ENCODE measurements at regions of chr4 and their contacts with region 1.

Region 1: GRCh38 chr4:153127760-153128494 is 76.3 kb upstream of the TRIM2 start:
- DNase-seq: peak; percentile 84
- H3K4me3 Mint-ChIP-seq: no peak overlapping the region
- H3K27ac Mint-ChIP-seq: no peak overlapping the region
- H3K4me1 Mint-ChIP-seq: peaks cover 2% of the 10 kb centered on the region
- H3K27me3 Mint-ChIP-seq: peaks cover 43% of the 10 kb centered on the region

Region 2: DNA sequence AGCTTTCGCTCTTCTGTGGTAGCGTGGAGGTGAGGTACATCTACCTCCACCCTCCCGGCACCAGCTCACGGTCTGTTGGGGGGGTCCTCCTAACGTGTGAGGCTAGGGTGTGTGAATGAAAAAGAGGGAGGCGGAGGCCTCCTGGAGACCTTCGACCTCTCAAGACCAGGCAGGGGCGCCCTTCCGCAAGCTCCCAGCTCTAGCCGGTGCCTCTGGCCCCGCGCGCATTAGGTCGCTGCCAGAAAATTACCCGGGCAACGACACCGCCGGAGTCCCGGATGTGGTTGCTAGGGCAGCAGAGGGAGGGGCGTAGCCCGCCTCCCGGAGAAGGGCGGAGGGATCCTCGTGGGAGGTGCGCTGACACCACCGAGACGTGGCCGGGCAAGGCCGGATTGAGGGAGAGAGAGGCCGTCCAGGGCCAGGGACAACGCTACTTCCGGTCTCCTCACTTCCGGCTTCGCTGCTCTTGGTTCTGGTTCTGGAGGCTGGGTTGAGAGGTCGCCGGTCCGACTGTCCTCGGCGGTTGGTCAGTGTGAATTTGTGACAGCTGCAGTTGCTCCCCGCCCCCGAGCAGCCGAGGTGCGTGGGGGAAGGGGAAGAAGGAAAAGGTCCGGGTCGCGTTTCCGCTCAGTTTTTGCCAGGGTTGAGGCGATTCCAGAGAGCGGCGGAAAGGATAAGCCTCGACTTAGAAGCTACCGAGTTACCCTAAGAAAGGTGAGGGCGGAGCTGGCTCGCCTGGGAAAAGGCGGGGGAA is 348.2 kb before region 1 on chr4 and contains the starts of genes ARFIP1 and TIGD4:
- CTCF ChIA-PET with region 1: interaction called, 10 read pairs
- POLR2A ChIA-PET with region 1: no interaction called
- DNase-seq: peak; percentile 97
- H3K4me3 Mint-ChIP-seq: peak within 1 kb of the TSS; percentile 99
- H3K27ac Mint-ChIP-seq: peak within 1 kb of the TSS; percentile 94
- H3K4me1 Mint-ChIP-seq: peaks cover 46% of the 10 kb centered on the region
- H3K27me3 Mint-ChIP-seq: peaks cover 11% of the 10 kb centered on the region
- total RNA-seq, gene ARFIP1: 15.5 to 16.3 TPM
- total RNA-seq, gene TIGD4: 0.13 to 0.35 TPM

Region 3: GRCh38 chr4:152850377-152850776 is 277.6 kb before region 1 on chr4:
- CTCF ChIA-PET with region 1: interaction called, 59 read pairs
- POLR2A ChIA-PET with region 1: no interaction called
- DNase-seq: peak; percentile 34
- H3K4me3 Mint-ChIP-seq: no peak overlapping the region
- H3K27ac Mint-ChIP-seq: no peak overlapping the region
- H3K4me1 Mint-ChIP-seq: peaks cover 15% of the 10 kb centered on the region
- H3K27me3 Mint-ChIP-seq: no peaks in the 10 kb centered on the region

Region 4: DNA sequence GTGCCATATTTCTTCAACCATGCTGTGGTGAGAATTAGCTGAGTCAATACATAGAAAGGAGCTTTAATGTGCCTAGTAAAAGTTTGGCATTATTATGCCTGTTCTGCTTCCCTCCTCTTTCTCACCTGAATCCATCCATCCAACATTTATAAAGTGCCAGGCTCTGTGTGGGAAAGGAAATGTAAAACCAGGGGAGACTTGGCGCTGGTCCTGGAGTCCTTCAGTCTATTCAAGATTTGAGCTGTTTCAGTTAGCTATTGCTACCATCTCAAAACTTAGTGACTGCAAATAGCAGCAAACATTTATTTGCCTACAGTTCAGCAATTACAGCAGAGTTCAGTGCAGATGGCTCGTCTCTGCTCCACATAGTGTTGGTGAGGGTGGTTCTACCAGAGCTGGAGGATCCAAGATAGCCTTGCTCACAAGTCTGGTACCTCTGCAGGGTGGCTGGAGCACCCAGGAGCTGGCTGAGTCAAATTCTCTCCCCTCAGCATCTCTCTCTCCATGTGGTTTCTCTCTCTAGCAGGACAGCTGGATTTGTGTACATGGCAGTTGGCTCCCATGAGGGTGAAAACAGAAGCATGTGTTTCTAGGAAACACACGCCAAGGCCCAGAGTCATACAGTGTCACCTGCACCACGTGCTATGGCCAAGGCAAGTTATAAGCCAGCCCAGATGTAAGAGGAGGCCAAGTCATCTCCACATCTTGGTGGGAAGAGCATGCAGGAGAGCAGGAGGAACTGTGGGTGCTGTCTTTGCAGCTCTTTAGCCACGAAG is 114.5 kb before region 1 on chr4:
- CTCF ChIA-PET with region 1: no interaction called
- POLR2A ChIA-PET with region 1: no interaction called
- DNase-seq: no peak
- H3K4me3 Mint-ChIP-seq: no peak overlapping the region
- H3K27ac Mint-ChIP-seq: no peak overlapping the region
- H3K4me1 Mint-ChIP-seq: no peaks in the 10 kb centered on the region
- H3K27me3 Mint-ChIP-seq: peaks cover 2% of the 10 kb centered on the region

Region 5: DNA sequence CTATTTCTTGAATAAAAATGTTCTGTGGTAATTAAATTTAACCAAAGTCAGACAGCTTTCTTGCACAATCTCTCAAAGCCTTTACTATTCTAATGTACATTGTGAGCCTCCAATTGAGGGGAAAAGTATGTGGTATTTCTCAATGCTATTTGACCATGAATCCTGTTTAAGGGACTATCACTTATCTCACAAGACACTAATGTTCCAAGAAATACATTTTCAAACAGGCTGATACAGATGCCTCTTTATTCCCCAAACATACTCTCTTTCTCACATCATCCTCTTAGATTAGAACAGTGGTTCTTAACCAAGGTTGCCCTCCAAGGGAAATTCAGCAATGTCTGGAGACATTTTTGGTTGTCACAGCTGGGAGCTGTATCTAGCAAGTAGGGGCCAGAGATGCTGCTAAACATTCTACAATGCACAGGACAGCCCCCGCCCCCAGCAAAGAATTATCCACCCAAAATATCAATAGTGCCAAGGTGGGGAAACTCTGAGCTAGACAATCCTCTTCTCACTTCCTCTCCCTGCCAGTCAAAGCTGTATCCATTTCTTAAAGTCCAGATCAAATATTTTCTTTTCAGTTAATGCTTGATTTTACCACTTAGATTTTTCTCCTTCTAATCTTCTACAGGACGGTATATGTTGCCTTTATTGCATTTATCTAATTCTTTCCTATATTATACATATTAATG is 52.8 kb before region 1 on chr4:
- CTCF ChIA-PET with region 1: interaction called, 248 read pairs
- POLR2A ChIA-PET with region 1: no interaction called
- DNase-seq: no peak
- H3K4me3 Mint-ChIP-seq: no peak overlapping the region
- H3K27ac Mint-ChIP-seq: no peak overlapping the region
- H3K4me1 Mint-ChIP-seq: no peaks in the 10 kb centered on the region
- H3K27me3 Mint-ChIP-seq: peaks cover 14% of the 10 kb centered on the region

Region 6: GRCh38 chr4:153083447-153083947 is 44.4 kb before region 1 on chr4:
- CTCF ChIA-PET with region 1: interaction called, 248 read pairs
- POLR2A ChIA-PET with region 1: interaction called, 8 read pairs
- DNase-seq: peak; percentile 39
- H3K4me3 Mint-ChIP-seq: no peak overlapping the region
- H3K27ac Mint-ChIP-seq: no peak overlapping the region
- H3K4me1 Mint-ChIP-seq: peaks cover 22% of the 10 kb centered on the region
- H3K27me3 Mint-ChIP-seq: peaks cover 50% of the 10 kb centered on the region

Region 7: GRCh38 chr4:153089742-153090141 is 38.2 kb before region 1 on chr4:
- CTCF ChIA-PET with region 1: interaction called, 248 read pairs
- POLR2A ChIA-PET with region 1: interaction called, 7 read pairs
- DNase-seq: no peak
- H3K4me3 Mint-ChIP-seq: no peak overlapping the region
- H3K27ac Mint-ChIP-seq: no peak overlapping the region
- H3K4me1 Mint-ChIP-seq: peaks cover 3% of the 10 kb centered on the region
- H3K27me3 Mint-ChIP-seq: peaks cover 29% of the 10 kb centered on the region

Region 8: GRCh38 chr4:153115322-153116290 is 12.3 kb before region 1 on chr4:
- CTCF ChIA-PET with region 1: interaction called, 50 read pairs
- POLR2A ChIA-PET with region 1: interaction called, 6 read pairs
- DNase-seq: peak; percentile 82
- H3K4me3 Mint-ChIP-seq: peak overlapping the region; percentile 6
- H3K27ac Mint-ChIP-seq: peak overlapping the region; percentile 62
- H3K4me1 Mint-ChIP-seq: peaks cover 3% of the 10 kb centered on the region
- H3K27me3 Mint-ChIP-seq: peaks cover 44% of the 10 kb centered on the region